Activated naive CD4-positive, alpha-beta T cell treated with anti-CD3 and anti-CD28 coated beads for 36 hours (primary cell): ENCODE measurements at regions of chr2 and their contacts with region 1.

Region 1: GRCh38 chr2:27086090-27086723 is 365 bp upstream of the KHK start:
- DNase-seq: peak; percentile 96
- H3K4me3 Mint-ChIP-seq: peak overlapping the region; percentile 81
- H3K27ac Mint-ChIP-seq: peak overlapping the region; percentile 63
- H3K4me1 Mint-ChIP-seq: peaks cover 30% of the 10 kb centered on the region
- H3K27me3 Mint-ChIP-seq: no peaks in the 10 kb centered on the region

Region 2: GRCh38 chr2:26970244-26970920 is 115.8 kb before region 1 on chr2 and contains the start of gene MAPRE3:
- CTCF ChIA-PET with region 1: no interaction called
- intact Hi-C with region 1: loop called (anchors 1 kb)
- DNase-seq: peak; percentile 75
- H3K4me3 Mint-ChIP-seq: peak within 1 kb of the TSS; percentile 77
- H3K27ac Mint-ChIP-seq: peak within 1 kb of the TSS; percentile 43
- H3K4me1 Mint-ChIP-seq: peaks cover 19% of the 10 kb centered on the region
- H3K27me3 Mint-ChIP-seq: peaks cover 6% of the 10 kb centered on the region
- total RNA-seq, gene MAPRE3: 2.9 to 3.8 TPM

Region 3: DNA sequence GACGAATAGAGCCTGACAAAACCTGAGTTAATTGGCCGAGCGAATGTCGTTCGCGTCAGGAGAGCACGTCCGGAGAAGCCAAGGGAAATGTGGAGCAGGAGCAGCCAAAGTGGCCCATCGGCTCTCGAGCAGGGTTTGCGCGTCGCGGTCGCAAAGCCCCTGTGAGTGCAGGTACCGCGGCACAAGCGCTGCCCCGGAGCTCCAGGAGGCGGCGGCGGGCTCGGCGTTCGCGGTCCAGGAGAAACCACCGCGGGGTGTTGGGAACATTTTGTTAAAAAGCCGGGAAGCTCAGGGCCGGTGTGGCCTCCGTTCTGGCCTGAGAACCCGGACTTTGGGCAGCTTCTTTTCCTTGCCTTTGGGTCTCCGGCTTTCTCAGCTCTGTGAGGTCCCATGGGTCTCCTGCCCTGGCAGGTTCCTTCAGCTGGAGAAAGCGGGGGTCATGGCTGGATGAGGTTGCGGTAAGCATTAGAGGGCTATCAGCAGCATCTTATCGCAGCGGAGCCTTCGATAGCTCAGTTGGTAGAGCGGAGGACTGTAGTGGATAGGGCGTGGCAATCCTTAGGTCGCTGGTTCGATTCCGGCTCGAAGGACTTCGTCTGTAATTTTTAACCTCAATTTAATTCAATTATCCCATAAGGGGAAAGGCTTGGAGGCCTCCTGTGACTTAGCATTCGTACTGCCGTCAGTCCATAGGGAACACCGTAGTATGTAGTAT is 35.8 kb before region 1 on chr2:
- CTCF ChIA-PET with region 1: interaction called, 8 read pairs
- intact Hi-C with region 1: loop called (anchors 1 kb)
- DNase-seq: peak; percentile 97
- H3K4me3 Mint-ChIP-seq: peak overlapping the region; percentile 86
- H3K27ac Mint-ChIP-seq: peak overlapping the region; percentile 97
- H3K4me1 Mint-ChIP-seq: peaks cover 16% of the 10 kb centered on the region
- H3K27me3 Mint-ChIP-seq: peaks cover 6% of the 10 kb centered on the region

Region 4: DNA sequence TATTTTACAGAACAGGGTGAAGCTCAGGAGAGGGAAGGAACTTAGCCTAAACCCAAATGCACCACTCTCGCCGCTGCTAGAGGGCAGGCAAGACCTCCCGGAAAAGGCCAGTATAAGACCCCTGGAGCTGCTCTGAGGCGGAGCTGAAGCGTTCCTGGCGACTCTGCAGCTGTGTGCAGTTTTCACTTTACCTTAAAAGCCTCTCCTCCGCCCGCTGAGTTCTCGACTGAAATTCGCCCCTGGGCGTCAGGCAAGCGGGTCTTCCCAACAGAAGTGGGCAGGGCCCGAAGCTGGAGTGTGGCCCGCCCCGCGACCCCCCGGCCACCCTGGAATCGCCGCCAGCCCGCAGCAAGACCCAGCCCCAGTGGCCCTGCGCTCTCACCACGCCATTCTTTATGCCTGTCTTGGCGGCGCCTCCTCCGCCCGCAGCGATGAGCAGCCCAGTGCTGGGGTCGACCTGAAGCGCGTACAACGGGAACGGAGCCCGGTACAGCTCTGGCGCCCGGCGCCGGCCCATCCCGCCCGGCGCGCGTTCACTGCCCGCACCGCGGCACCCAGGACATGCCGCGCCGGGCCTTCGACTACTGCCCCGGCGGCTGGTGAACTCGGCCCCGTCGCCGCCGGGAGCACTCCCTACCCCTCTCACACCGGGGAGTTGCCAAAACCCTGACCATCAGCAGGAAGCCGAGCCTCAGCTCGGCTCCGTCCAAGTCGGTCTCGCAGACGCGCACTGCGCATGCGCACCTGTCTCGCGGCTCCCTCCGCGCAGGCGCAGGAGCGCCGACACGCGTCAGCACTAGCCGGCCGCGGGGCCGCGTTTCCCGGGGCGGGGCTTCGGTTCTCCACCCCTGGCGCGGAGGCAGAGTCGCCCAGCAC is 47.9 kb after region 1 on chr2 and contains the start of gene PREB:
- CTCF ChIA-PET with region 1: interaction called, 8 read pairs
- intact Hi-C with region 1: loop called (anchors 5 kb)
- DNase-seq: peak; percentile 98
- H3K4me3 Mint-ChIP-seq: peak within 1 kb of the TSS; percentile 95
- H3K27ac Mint-ChIP-seq: peak within 1 kb of the TSS; percentile 93
- H3K4me1 Mint-ChIP-seq: peaks cover 20% of the 10 kb centered on the region
- H3K27me3 Mint-ChIP-seq: no peaks in the 10 kb centered on the region
- total RNA-seq, gene PREB: 45.2 to 49.5 TPM

Region 5: DNA sequence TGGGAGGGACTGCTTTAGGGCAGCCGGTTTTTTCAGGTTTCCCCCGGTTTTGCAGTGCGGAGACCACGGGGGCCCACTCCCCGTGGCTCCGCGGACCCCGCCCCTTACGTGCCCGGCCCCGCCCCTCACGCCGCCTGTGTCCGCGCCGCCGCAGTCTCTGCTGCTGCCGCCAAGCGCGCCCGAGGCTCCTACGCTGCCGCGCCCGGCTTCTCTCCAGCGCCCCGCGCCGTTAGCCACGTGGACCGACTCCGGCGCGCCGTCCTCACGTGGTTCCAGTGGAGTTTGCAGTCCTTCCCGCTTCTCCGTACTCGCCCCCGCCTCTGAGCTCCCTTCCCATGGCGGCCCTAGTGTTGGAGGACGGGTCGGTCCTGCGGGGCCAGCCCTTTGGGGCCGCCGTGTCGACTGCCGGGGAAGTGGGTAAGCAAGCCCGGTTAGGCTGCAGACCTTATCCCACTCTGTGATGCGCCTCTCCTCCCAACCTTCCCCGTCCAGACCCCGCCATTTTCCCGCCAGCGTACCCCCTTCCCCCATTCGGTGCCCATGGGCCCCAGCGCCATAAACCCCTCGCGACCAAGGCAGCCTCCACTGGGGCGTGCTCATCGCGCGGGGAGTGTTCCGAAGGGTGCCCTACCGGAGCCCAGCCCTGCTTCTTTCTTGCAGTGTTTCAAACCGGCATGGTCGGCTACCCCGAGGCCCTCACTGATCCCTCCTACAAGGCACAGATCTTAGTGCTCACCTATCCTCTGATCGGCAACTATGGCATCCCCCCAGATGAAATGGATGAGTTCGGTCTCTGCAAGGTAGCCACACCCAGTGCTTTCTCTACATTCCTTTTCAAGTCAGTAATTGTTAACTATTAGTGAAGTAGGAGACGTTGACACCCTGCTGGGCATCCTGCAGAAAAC is 131.3 kb after region 1 on chr2 and contains the start of gene CAD:
- CTCF ChIA-PET with region 1: no interaction called
- intact Hi-C with region 1: loop called (anchors 1 kb)
- DNase-seq: peak; percentile 89
- H3K4me3 Mint-ChIP-seq: peak within 1 kb of the TSS; percentile 97
- H3K27ac Mint-ChIP-seq: peak within 1 kb of the TSS; percentile 86
- H3K4me1 Mint-ChIP-seq: peaks cover 43% of the 10 kb centered on the region
- H3K27me3 Mint-ChIP-seq: no peaks in the 10 kb centered on the region
- total RNA-seq, gene CAD: 109 to 112 TPM

Region 6: DNA sequence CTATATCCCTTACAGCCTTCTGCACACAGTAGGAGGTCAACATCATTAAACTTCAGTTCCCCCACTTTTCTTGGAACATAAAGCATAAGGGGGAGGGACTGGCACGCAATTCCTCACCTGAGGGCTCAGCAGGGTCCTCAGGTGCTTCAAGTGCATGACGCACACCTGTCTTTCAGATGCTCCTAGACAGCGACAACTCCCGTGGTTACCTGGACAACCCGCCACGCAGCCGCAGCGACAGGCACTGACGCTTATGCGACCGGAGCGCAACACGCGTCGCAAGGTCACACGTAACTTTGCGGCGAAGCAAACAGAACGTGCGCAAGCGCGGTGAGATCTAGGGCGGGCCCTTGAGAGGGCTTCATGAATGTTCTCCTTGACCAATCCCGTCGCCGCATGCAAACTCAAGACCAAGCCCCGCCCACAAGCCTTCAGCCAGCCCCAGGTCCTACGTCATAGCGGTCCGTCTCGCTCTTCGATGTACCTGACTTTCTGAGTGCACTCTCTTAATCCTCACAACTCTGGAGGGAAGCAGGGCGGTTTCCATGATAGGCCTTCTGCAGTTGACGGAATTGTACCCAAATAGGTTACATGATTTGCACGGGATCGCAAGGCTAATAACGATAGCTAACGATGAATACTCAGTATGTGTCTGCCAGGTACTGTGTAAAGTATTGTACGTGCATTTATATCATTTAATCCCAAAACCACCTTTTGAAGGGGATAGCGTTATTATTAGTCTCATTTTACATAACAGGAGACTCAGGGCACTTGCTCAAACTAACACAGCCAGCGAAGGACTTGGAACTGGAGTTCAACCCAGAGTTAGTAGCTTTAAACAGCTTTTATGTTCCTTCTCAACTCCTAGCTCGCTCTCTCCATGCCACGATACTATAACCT is 403.5 kb after region 1 on chr2 and contains the start of gene IFT172:
- CTCF ChIA-PET with region 1: no interaction called
- intact Hi-C with region 1: loop called (anchors 1 kb)
- DNase-seq: peak; percentile 100
- H3K4me3 Mint-ChIP-seq: peak within 1 kb of the TSS; percentile 87
- H3K27ac Mint-ChIP-seq: peak within 1 kb of the TSS; percentile 66
- H3K4me1 Mint-ChIP-seq: peaks cover 20% of the 10 kb centered on the region
- H3K27me3 Mint-ChIP-seq: peaks cover 10% of the 10 kb centered on the region
- total RNA-seq, gene IFT172: 9.2 to 12.7 TPM